ENCODE measurements at regions of chr7 and their contacts with region 1.

Region 1: DNA sequence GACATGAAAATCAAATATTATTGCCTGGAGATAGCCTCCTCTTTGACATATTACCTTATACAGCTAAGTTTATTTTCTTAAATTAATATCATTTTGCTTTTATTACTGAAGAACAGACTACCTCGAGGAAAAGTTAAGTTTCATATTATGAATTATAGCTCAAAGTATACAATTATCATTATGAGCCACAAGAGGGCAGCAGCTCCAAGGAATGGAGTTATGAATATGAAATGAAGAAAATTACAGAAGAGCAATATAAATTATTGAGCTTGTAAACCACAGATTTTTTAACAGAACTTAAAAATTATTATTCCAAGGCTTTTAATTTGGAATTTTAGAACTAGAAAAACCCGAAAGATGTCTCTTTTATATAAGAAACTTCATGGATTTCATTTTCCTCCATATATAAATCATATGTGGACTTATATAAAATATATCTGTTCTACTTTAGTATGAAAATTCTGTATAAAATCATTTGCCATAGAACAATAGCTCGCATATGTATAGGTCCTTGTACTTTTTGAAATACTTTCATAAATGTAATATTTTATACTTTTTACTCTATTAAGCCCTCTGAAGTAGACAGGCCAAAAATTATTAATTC is 40.1 kb downstream of the IQUB start:
- DNase-seq: peak; percentile 20
- ATAC-seq: no peak
- H3K4me3 ChIP-seq: no peak overlapping the region
- H3K27ac ChIP-seq: no peak overlapping the region
- H3K4me1 ChIP-seq: no peaks in the 10 kb centered on the region
- H3K27me3 ChIP-seq: no peaks in the 10 kb centered on the region; the same call in 1 of the 2 replicates
- CTCF ChIP-seq: peak; percentile 69; the same call in 1 of the 2 replicates

Region 2: DNA sequence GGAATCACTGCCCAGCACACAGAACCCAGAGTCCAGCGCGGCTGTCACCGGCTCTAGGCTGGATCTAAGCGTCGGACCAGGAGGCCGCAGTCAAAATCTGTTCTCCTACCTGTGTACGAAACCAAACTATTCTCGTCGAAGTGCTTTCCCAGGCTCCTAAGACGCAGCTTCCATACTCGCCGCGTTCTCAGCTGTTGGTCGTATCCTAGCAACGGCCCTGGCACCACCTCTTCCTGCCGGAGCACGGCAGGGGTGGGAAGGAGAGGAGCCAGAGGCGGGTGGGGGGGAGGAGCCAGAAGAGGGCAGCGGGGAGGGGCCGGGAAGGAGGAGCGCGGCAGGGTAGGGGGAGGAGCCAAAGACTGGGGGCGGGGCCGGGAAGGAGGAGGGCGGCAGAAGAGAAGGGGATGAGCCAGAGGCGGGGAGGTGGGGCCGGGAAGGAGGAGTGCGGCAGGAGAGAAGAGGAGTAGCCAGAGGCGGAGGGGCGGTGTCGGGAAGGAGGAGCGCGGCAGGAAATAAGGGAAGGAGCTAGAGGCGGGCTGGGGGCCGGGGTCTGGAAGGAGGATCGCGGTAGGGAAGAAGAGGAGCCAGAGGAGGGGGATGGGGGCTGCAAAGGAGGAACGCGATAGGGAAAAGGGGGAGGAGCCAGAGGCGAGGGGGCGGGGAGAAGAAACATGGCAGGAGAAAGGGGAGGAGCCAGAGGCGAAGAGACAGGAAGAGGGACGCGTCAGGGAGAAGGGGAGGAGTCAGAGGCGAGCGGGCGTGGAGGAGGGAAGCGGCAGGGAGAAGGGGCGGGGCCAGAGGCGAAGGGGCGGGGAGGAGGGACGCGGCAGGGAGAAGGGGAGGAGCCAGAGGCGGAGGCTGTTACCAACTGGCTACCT is 40.3 kb after region 1 on chr7 and contains the start of gene IQUB:
- CTCF ChIA-PET with region 1: interaction called, 6 read pairs
- POLR2A ChIA-PET with region 1: no interaction called
- in situ Hi-C with region 1: no loop called
- intact Hi-C with region 1: loop called (anchors 2 kb)
- DNase-seq: peak; percentile 95
- ATAC-seq: peak; percentile 92
- H3K4me3 ChIP-seq: peak within 1 kb of the TSS; percentile 71 to 76
- H3K27ac ChIP-seq: peak within 1 kb of the TSS; percentile 59
- H3K4me1 ChIP-seq: peaks cover 3% of the 10 kb centered on the region; the same call in 1 of the 2 replicates
- H3K27me3 ChIP-seq: peaks cover 10% of the 10 kb centered on the region
- CTCF ChIP-seq: no peak
- total RNA-seq, gene IQUB: 0.59 TPM

Region 3: DNA sequence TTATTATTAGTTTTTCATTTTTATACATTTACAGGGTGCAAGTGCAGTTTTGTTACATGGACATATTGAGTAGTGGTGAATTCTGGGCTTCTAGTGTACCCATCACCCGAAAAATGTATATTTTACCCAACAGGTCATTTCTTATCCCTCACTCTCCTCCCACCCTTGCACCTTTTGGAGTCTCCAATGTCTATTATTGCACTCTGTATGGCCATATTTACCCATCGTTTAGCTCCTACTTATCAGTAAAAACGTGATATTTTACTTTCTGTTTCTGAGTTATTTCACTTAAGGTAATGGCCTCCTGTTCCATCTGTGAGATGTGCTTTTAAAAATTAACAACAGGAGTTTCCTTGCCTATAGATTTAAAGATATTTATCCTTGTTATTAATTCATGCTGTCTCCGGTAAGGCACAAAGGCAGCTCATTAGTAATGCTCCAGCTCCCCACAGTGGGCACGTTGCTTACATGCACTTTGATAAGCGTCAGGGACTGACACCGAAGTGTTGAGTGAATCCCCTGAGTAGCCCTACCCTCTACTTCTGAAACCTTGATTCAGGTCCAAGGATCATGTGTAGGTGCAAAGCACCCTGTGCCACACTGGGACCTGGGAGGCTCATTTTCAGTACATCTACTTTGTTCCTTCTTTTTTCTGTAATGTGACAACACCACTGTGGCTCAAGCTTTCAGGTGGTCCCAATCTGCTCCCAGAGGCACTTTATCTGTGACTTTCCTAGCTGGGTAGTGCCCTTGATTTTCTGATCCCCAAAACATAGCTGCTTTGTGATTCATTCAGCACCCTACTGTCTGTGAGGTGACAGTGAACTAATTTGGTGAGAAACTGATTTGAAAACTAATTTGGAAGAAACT is 377.9 kb after region 1 on chr7:
- CTCF ChIA-PET with region 1: no interaction called
- POLR2A ChIA-PET with region 1: no interaction called
- in situ Hi-C with region 1: no loop called
- intact Hi-C with region 1: loop called (anchors 10 kb)
- DNase-seq: peak; percentile 55
- ATAC-seq: peak; percentile 94
- H3K4me3 ChIP-seq: no peak overlapping the region
- H3K27ac ChIP-seq: no peak overlapping the region
- H3K4me1 ChIP-seq: no peaks in the 10 kb centered on the region
- H3K27me3 ChIP-seq: peaks cover 10% of the 10 kb centered on the region; the same call in 1 of the 2 replicates
- CTCF ChIP-seq: peak; percentile 69